ENCODE measurements at regions of chr18 and their contacts with region 1.

Region 1: DNA sequence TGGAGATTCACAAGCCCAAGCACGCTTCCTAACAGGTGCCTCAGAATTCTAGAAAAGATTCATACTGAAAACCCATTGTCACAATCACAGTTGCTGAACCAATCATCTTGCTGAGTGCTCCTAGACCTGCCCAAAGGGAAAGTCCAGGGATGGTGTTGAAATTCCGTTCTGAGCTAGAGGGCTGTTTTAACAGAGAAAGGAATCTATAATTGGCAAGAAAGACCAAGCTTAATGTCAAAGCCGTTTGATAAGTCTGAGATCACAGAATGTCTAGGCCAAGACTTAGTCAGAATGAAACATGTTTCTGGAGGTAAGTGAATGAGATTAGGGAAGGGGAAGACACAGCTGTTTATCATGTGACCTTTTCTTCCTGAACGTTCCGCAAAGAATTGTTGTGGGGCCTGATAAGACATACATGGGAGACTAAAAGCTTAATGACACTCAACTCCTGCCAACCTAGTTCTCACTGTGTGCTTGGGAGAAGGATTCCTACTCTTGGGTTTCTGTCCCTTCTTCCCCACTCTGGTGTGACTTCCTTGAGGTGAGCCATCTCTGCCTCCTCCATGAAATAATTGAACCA is 27.5 kb downstream of the PMAIP1 start:
- DNase-seq: peak; percentile 72
- H3K4me3 Mint-ChIP-seq: no peak overlapping the region
- H3K27ac Mint-ChIP-seq: peak overlapping the region; percentile 75
- H3K4me1 Mint-ChIP-seq: peaks cover 37% of the 10 kb centered on the region
- H3K27me3 Mint-ChIP-seq: peaks cover 2% of the 10 kb centered on the region

Region 2: DNA sequence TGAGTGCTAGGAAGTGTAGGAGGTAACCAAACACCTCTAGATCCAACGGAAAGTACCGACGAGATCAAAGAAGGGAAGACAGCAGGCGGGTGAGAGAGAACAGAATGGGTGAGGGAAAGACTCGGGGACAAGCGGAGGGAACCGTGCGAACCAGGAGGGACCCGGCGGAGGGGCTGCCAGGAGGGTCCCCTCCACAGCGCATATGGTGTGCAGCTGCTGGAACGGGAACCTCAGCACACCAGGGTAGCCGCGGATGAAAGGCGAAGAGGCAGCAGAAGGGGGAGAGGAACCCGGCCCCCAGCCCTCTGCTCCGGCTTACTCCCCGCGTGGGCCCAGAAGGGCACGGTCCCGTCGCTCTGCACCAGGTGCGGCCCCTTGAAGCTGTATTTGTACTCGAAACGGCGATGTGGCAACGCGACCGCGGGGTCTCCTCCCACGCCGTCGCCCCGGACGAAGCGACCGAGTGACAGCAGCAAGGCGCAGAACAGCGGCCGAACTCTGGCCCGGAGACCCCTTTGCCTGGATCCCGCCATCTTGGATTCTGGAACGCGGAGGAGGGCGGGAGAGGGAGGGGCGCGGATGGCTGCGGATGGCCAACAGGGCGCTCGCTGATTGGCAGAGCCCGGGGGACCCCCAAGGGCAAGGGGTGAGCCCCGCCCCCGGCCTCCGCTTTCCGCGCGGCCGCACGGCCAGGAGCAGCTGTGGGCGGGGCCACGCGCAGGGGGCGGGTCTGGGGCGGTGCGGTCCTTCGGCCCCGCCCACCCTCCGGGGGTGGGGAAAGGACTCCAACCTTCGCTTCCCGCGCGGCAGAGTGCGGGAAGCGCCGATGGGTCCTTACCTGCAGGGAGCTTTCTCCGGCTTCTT is 568.4 kb before region 1 on chr18 and contains the start of gene LMAN1:
- CTCF ChIA-PET with region 1: no interaction called
- POLR2A ChIA-PET with region 1: no interaction called
- intact Hi-C with region 1: no loop called
- DNase-seq: peak; percentile 97
- H3K4me3 Mint-ChIP-seq: peak within 1 kb of the TSS; percentile 83
- H3K27ac Mint-ChIP-seq: peak within 1 kb of the TSS; percentile 94
- H3K4me1 Mint-ChIP-seq: peaks cover 26% of the 10 kb centered on the region
- H3K27me3 Mint-ChIP-seq: no peaks in the 10 kb centered on the region
- total RNA-seq, gene LMAN1: 155 to 158 TPM

Region 3: GRCh38 chr18:59814891-59815290 is 112.4 kb before region 1 on chr18:
- CTCF ChIA-PET with region 1: no interaction called
- POLR2A ChIA-PET with region 1: no interaction called
- intact Hi-C with region 1: no loop called
- DNase-seq: no peak
- H3K4me3 Mint-ChIP-seq: no peak overlapping the region
- H3K27ac Mint-ChIP-seq: no peak overlapping the region
- H3K4me1 Mint-ChIP-seq: no peaks in the 10 kb centered on the region
- H3K27me3 Mint-ChIP-seq: peaks cover 15% of the 10 kb centered on the region

Region 4: GRCh38 chr18:59846814-59847490 is 80.4 kb before region 1 on chr18:
- CTCF ChIA-PET with region 1: no interaction called
- POLR2A ChIA-PET with region 1: no interaction called
- intact Hi-C with region 1: loop called (anchors 1 kb)
- DNase-seq: peak; percentile 80
- H3K4me3 Mint-ChIP-seq: no peak overlapping the region
- H3K27ac Mint-ChIP-seq: peak overlapping the region; percentile 74
- H3K4me1 Mint-ChIP-seq: peaks cover 16% of the 10 kb centered on the region
- H3K27me3 Mint-ChIP-seq: peaks cover 1% of the 10 kb centered on the region

Region 5: DNA sequence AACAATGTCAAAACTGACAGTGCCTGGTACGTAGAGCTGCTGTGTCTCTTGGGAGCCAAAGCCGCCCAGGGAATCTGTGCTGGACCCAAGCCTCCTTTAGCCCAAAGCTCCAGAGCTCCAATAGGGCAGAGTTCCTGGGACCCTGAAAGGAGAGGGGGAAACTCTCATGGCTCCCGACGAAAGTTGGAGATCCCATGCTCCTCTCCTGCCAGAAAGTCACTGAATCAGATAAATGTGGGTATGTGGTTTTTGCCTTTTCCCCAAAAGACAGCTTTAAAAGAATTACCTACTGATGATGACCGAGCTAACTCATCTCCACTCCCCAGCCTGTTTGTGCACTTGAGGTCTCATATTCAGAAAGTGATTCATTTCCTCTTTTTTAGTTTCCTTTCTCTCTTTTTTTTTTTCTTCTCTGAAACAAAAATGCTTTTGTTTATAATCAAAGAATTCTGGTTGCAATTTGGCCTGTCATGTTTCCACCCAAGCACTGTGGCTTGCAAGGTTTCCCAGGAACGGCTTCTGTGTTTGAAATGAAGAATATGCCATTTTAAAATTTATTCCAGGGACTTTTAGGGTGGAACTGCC is 41.7 kb before region 1 on chr18:
- CTCF ChIA-PET with region 1: interaction called, 3 read pairs
- POLR2A ChIA-PET with region 1: interaction called, 8 read pairs
- intact Hi-C with region 1: loop called (anchors 1 kb)
- DNase-seq: peak; percentile 46
- H3K4me3 Mint-ChIP-seq: peak overlapping the region; percentile 27
- H3K27ac Mint-ChIP-seq: peak overlapping the region; percentile 63
- H3K4me1 Mint-ChIP-seq: peaks cover 37% of the 10 kb centered on the region
- H3K27me3 Mint-ChIP-seq: no peaks in the 10 kb centered on the region

Region 6: DNA sequence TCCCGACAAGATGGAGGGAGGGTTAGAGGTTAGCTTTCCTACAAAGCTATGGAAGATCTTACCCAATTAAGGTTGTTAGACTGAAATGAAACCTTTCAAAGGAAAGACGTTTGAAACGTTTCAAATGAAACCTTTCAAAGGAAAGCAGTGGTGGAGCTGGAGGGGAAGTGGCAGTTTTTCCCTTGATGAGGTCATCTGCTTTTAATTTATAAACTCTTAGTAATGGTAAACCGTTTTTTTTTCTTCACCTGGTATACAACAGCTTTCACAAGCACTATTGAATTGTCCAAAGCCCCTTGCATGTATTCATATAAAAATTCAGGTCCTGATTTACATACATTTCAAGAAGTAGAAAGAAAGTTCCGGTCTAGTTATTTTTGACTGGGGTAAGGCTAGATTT is 20.2 kb before region 1 on chr18:
- CTCF ChIA-PET with region 1: interaction called, 3 read pairs
- POLR2A ChIA-PET with region 1: interaction called, 9 read pairs
- intact Hi-C with region 1: loop called (anchors 1 kb)
- DNase-seq: peak; percentile 34
- H3K4me3 Mint-ChIP-seq: peak overlapping the region; percentile 3
- H3K27ac Mint-ChIP-seq: peak overlapping the region; percentile 76
- H3K4me1 Mint-ChIP-seq: peaks cover 64% of the 10 kb centered on the region
- H3K27me3 Mint-ChIP-seq: no peaks in the 10 kb centered on the region

Region 7: GRCh38 chr18:59950215-59950944 is 23.0 kb after region 1 on chr18:
- CTCF ChIA-PET with region 1: interaction called, 8 read pairs
- POLR2A ChIA-PET with region 1: interaction called, 20 read pairs
- intact Hi-C with region 1: loop called (anchors 1 kb)
- DNase-seq: peak; percentile 35
- H3K4me3 Mint-ChIP-seq: no peak overlapping the region
- H3K27ac Mint-ChIP-seq: peak overlapping the region; percentile 68
- H3K4me1 Mint-ChIP-seq: peaks cover 49% of the 10 kb centered on the region
- H3K27me3 Mint-ChIP-seq: no peaks in the 10 kb centered on the region

Measured in activated CD4-positive, alpha-beta memory T cell treated with anti-CD3 and anti-CD28 coated beads for 36 hours (primary cell).